ENCODE measurements at regions of chrX and their contacts with region 1.

Region 1: DNA sequence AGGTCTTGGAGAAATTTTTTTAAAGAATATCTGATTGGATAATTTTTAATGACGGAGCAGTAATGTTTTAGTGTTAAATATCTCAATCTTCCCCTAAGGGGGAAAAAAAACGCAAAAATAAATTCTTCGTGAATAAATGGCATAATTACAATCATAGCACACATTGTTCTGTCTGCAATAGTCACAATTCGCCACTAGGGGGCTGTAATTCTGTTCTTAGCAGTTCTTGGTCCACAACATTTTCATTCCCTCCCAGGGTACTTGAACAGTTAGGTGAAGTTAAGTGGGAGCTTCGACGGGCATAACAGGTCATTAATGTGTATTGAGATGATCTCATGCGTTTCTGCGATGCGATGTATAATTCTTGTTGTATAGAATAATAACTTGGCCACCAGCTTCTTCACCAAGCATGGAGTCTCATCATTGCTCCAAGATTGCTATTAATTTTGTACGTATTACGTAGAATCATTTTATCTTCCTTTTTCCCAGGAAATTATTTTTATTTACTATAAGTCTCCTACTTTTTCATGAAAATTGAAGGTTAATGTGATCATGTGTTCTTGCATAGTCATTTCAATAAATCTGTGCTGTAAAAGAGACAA is 27.2 kb downstream of the HTR2C start:
- DNase-seq: peak; percentile 7
- H3K4me3 ChIP-seq: no peak overlapping the region
- H3K27ac ChIP-seq: no peak overlapping the region
- H3K27me3 ChIP-seq: no peaks in the 10 kb centered on the region
- CTCF ChIP-seq: peak; percentile 71

Region 2: GRCh38 chrX:114344756-114345349 is 266.3 kb before region 1 on chrX:
- CTCF ChIA-PET with region 1: no interaction called
- POLR2A ChIA-PET with region 1: no interaction called
- DNase-seq: no peak
- H3K4me3 ChIP-seq: no peak overlapping the region
- H3K27ac ChIP-seq: no peak overlapping the region
- H3K27me3 ChIP-seq: no peaks in the 10 kb centered on the region
- CTCF ChIP-seq: peak; percentile 49

Region 3: GRCh38 chrX:114599305-114599704 is 11.8 kb before region 1 on chrX:
- CTCF ChIA-PET with region 1: no interaction called
- POLR2A ChIA-PET with region 1: no interaction called
- DNase-seq: no peak
- H3K4me3 ChIP-seq: no peak overlapping the region
- H3K27ac ChIP-seq: no peak overlapping the region
- H3K27me3 ChIP-seq: no peaks in the 10 kb centered on the region
- CTCF ChIP-seq: no peak

Region 4: GRCh38 chrX:115147220-115147619 is 536.1 kb after region 1 on chrX:
- CTCF ChIA-PET with region 1: interaction called, 14 read pairs
- POLR2A ChIA-PET with region 1: no interaction called
- DNase-seq: no peak
- H3K4me3 ChIP-seq: no peak overlapping the region
- H3K27ac ChIP-seq: no peak overlapping the region
- H3K27me3 ChIP-seq: no peaks in the 10 kb centered on the region
- CTCF ChIP-seq: peak; percentile 47